Colonic mucosa (tissue), 4 donors: ENCODE measurements at regions of chr16 and their contacts with region 1.

Region 1: DNA sequence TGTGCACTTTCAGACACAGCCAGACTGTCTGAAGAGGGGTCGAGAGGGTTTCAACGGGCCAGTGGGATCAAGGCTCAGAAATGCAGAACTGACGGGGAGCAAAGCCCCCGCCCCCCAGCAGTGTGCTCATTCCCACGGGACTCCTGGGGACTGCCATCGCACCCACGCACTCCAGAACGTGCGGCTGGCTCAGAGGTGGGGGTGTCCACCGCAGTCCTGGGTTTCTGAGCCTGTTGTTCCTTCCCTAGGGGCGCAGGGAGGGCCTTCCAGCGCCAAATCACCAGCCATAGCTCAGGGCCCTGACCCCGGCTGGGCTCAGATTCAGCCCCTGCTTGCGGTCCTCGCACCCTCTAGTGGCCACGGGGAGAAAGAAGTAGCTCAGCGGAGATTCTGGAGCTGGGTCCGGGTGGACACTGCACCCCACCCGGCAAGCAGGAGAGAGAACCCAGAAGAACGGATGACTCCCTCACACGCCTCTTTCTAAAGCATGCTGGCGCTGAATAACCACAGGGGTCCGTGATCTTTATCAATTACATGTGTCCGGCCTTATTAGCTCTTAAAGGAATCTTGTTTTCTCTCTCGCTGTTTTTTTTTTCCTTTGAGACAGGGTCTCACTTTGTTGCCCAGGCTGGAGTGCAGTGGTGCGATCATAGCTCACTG is 45.0 kb upstream of the USP7 start:
- DNase-seq: peak; percentile 89
- H3K4me3 ChIP-seq: peak overlapping the region; percentile 29
- H3K27ac ChIP-seq: no peak overlapping the region
- H3K4me1 ChIP-seq: peaks cover 4% of the 10 kb centered on the region
- H3K27me3 ChIP-seq: no peaks in the 10 kb centered on the region
- CTCF ChIP-seq: peak; percentile 86

Region 2: GRCh38 chr16:8912793-8913192 is 95.9 kb before region 1 on chr16:
- intact Hi-C with region 1: loop called (anchors 5 kb)
- DNase-seq: no peak
- H3K4me3 ChIP-seq: no peak overlapping the region
- H3K27ac ChIP-seq: no peak overlapping the region
- H3K4me1 ChIP-seq: peaks cover 7% of the 10 kb centered on the region
- H3K27me3 ChIP-seq: no peaks in the 10 kb centered on the region
- CTCF ChIP-seq: no peak

Region 3: GRCh38 chr16:9330095-9330494 is 321.4 kb after region 1 on chr16:
- intact Hi-C with region 1: no loop called
- DNase-seq: no peak
- H3K4me3 ChIP-seq: no peak overlapping the region
- H3K27ac ChIP-seq: no peak overlapping the region
- H3K4me1 ChIP-seq: no peaks in the 10 kb centered on the region
- H3K27me3 ChIP-seq: no peaks in the 10 kb centered on the region
- CTCF ChIP-seq: no peak